ENCODE measurements at regions of chr4 and their contacts with region 1.

Region 1: GRCh38 chr4:73539386-73539785 is 57.8 kb downstream of the AFM start:
- DNase-seq: no peak
- H3K4me3 ChIP-seq: no peak overlapping the region
- H3K27ac ChIP-seq: no peak overlapping the region
- H3K4me1 ChIP-seq: no peaks in the 10 kb centered on the region
- H3K27me3 ChIP-seq: no peaks in the 10 kb centered on the region
- CTCF ChIP-seq: no peak

Region 2: GRCh38 chr4:72352403-72353105 is 1186.8 kb before region 1 on chr4:
- CTCF ChIA-PET with region 1: no interaction called
- dilution Hi-C with region 1: no loop called
- in situ Hi-C with region 1: no loop called
- intact Hi-C with region 1: no loop called
- DNase-seq: peak; percentile 14
- H3K4me3 ChIP-seq: no peak overlapping the region
- H3K27ac ChIP-seq: no peak overlapping the region
- H3K4me1 ChIP-seq: peaks cover 2% of the 10 kb centered on the region
- H3K27me3 ChIP-seq: no peaks in the 10 kb centered on the region
- CTCF ChIP-seq: no peak

Region 3: GRCh38 chr4:73477176-73477575 is 62.2 kb before region 1 on chr4:
- CTCF ChIA-PET with region 1: no interaction called
- dilution Hi-C with region 1: loop called (anchors 5 kb)
- in situ Hi-C with region 1: no loop called
- intact Hi-C with region 1: no loop called
- DNase-seq: no peak
- H3K4me3 ChIP-seq: no peak overlapping the region
- H3K27ac ChIP-seq: no peak overlapping the region
- H3K4me1 ChIP-seq: no peaks in the 10 kb centered on the region
- H3K27me3 ChIP-seq: peaks cover 3% of the 10 kb centered on the region
- CTCF ChIP-seq: no peak

Region 4: DNA sequence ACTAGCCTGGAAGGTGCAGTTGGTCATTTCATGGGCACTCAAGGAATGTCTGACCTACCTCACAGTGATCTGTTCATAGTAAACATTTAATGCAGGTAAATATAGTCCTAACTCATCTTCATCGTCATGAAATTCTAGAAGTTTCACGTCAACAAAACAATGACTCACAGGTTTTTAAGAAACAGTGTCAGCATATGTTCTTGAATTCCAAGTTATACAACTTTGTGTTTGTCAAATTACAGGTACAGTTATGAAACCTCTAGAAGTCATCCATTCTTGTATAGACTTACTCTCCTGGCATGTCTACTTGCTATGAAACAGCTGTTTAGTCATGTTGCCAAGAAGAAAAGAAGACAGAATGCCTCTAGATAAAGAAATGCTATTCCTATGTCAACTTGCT is 11.2 kb before region 1 on chr4:
- CTCF ChIA-PET with region 1: interaction called, 3 read pairs
- dilution Hi-C with region 1: no loop called
- in situ Hi-C with region 1: no loop called
- intact Hi-C with region 1: loop called (anchors 1 kb)
- DNase-seq: peak; percentile 35
- H3K4me3 ChIP-seq: no peak overlapping the region
- H3K27ac ChIP-seq: no peak overlapping the region
- H3K4me1 ChIP-seq: no peaks in the 10 kb centered on the region
- H3K27me3 ChIP-seq: no peaks in the 10 kb centered on the region
- CTCF ChIP-seq: no peak

Region 5: GRCh38 chr4:73740353-73740778 is 201.0 kb after region 1 on chr4 and contains the start of gene CXCL8:
- CTCF ChIA-PET with region 1: no interaction called
- dilution Hi-C with region 1: no loop called
- in situ Hi-C with region 1: no loop called
- intact Hi-C with region 1: no loop called
- DNase-seq: peak; percentile 96
- H3K4me3 ChIP-seq: peak within 1 kb of the TSS in 2 of 3 experiments; percentile 0 to 34
- H3K27ac ChIP-seq: peak within 1 kb of the TSS; percentile 55
- H3K4me1 ChIP-seq: peaks cover 19% of the 10 kb centered on the region
- H3K27me3 ChIP-seq: no peaks in the 10 kb centered on the region
- CTCF ChIP-seq: no peak
- total RNA-seq, gene CXCL8: 1.0 to 14.0 TPM

Region 6: GRCh38 chr4:73788411-73788810 is 249.0 kb after region 1 on chr4:
- CTCF ChIA-PET with region 1: no interaction called
- dilution Hi-C with region 1: no loop called
- in situ Hi-C with region 1: no loop called
- intact Hi-C with region 1: no loop called
- DNase-seq: no peak
- H3K4me3 ChIP-seq: no peak overlapping the region
- H3K27ac ChIP-seq: no peak overlapping the region
- H3K4me1 ChIP-seq: no peaks in the 10 kb centered on the region
- H3K27me3 ChIP-seq: no peaks in the 10 kb centered on the region
- CTCF ChIP-seq: no peak

Measured in mammary epithelial cell (primary cell).